Activated CD4-positive, alpha-beta T cell treated with anti-CD3 and anti-CD28 coated beads for 36 hours (primary cell): ENCODE measurements at regions of chr5 and their contacts with region 1.

Region 1: DNA sequence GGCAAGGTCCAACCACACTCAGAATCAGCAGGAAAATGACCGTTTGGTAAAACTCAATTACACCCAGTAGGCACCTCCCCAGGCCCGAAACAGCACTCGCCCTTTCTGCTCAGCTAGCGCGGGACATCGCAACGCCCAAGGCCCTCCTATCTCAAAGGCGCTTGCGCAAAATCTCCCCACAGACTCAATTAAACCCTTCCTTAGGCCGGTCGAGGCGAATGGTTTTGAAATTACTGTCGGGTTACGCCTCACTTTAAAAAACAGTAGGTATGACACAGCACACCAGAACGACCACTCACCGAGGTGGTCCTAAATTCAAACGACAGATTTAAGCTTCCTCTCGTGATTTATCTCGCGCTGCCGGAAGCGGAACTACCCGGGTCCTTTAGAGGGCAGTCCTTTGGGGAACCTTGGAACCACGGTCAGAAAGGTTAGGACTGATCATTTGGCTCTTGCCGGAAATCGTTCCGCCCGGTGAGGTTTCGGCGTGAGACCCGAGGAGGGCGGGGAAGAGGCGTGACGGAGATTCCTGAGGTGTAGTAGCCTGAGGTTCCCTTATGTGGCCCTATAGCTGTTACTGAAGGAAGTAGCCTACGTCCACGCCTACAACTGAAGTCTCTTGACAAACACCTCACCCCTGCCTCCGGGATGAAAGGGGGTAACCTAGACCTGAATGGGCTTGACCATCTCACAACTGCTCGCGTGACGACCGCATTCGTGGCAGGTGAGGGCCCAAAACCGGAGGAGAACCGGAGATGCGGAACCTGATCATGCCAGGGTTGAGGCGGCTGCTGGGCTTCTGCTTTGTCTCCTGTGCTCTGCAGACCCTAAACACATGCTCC is at the starts of genes GIN1 and PPIP5K2:
- DNase-seq: peak; percentile 97
- ATAC-seq: peak; percentile 91
- H3K4me3 Mint-ChIP-seq: peak within 1 kb of the TSS; percentile 76
- H3K27ac Mint-ChIP-seq: peak within 1 kb of the TSS; percentile 95
- H3K4me1 Mint-ChIP-seq: peaks cover 39% of the 10 kb centered on the region
- H3K27me3 Mint-ChIP-seq: no peaks in the 10 kb centered on the region
- total RNA-seq, gene GIN1: 9.0 to 9.7 TPM
- total RNA-seq, gene PPIP5K2: 49.5 to 53.4 TPM

Region 2: DNA sequence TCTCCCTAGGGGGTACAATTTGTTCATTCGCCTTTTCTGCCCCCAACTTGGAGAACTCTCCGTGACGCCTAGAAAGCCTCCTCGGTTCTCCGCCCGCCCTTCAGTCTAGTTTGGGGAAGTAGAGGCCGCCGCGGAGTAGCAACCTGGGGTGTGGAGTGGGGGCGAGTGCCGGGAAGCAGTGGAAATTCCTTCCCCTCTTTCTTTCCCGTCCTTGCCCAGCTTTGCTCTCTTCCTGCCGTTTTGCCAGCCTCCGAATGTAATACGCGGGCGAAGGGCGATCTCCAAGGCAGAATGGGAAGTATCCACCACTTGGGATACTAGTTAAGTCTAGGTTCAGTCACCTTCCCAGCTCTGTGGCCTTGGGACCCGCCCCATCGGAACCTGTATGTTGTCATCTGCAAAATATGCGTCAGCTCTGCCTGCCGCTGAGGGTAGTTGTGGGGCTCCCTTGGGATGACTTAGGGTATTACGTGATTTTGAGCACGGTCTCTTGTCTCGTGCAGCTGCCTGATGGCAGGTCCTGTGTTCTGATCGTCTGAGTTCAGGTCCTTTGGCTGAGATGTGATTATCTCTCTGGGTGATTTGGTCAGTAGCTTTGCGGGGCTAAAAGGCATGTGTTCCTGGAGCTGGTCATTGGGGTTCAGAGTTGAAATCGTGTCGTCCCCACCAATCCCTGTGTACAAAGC is 364.2 kb before region 1 on chr5:
- CTCF ChIA-PET with region 1: interaction called, 7 read pairs
- POLR2A ChIA-PET with region 1: interaction called, 3 read pairs
- intact Hi-C with region 1: loop called in 1 of 2 experiments (anchors 1 kb)
- DNase-seq: peak; percentile 90
- ATAC-seq: peak; percentile 89
- H3K4me3 Mint-ChIP-seq: peak overlapping the region; percentile 84
- H3K27ac Mint-ChIP-seq: peak overlapping the region; percentile 98
- H3K4me1 Mint-ChIP-seq: peaks cover 52% of the 10 kb centered on the region
- H3K27me3 Mint-ChIP-seq: peaks cover 9% of the 10 kb centered on the region

Region 3: DNA sequence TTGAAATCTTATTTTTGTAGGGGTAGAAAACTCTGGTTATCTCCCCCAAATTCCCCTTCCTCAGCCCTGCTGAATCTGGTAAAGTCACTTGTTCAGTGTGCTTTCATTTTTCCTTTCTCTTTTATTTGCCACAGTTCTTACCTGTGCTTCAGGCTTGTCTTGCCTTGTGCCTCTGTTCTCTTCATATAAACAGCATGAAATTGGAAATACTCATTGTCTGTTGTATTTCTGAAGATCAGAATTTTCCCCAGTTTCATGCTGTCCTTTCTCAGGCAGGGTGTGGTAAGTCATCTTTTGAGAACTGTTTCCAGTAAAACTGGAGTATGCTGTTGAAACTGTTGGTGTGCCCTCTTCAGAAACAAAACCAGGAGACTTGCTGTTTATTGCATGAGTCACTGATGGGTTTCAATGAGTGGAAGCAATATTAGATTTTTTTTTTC is 357.9 kb before region 1 on chr5:
- CTCF ChIA-PET with region 1: no interaction called
- POLR2A ChIA-PET with region 1: no interaction called
- intact Hi-C with region 1: loop called in 1 of 2 experiments (anchors 2 kb)
- DNase-seq: no peak
- ATAC-seq: peak; percentile 75
- H3K4me3 Mint-ChIP-seq: peak overlapping the region; percentile 59
- H3K27ac Mint-ChIP-seq: peak overlapping the region; percentile 85
- H3K4me1 Mint-ChIP-seq: peaks cover 85% of the 10 kb centered on the region
- H3K27me3 Mint-ChIP-seq: no peaks in the 10 kb centered on the region

Region 4: GRCh38 chr5:102998224-102998623 is 121.8 kb before region 1 on chr5:
- CTCF ChIA-PET with region 1: no interaction called
- POLR2A ChIA-PET with region 1: no interaction called
- intact Hi-C with region 1: no loop called
- DNase-seq: no peak
- ATAC-seq: no peak
- H3K4me3 Mint-ChIP-seq: no peak overlapping the region
- H3K27ac Mint-ChIP-seq: no peak overlapping the region
- H3K4me1 Mint-ChIP-seq: peaks cover 10% of the 10 kb centered on the region
- H3K27me3 Mint-ChIP-seq: no peaks in the 10 kb centered on the region